ENCODE measurements at regions of chr3 and their contacts with region 1.

Region 1: DNA sequence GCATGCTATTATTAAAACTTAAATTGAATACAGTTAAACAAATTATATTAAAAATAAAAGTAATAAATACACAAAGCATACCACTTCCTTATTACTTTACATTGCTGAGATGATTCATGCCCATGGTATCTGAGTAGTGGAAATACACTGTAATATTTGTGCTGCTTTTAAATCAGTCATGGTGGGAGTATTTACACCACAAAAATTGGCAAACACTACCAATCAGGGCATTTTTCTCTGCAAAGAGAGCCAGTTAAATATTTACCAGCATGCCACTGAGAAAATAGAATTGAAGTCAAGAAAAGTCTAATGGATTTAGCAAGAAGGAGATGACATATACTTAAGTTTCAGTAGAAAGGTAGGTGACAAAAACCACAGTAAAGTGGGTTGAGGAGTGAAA is 19.6 kb downstream of the PPARG start:
- DNase-seq: peak; percentile 12
- H3K4me3 ChIP-seq: no peak overlapping the region
- H3K27ac ChIP-seq: no peak overlapping the region
- H3K4me1 ChIP-seq: no peaks in the 10 kb centered on the region
- H3K27me3 ChIP-seq: peaks cover 9% of the 10 kb centered on the region
- CTCF ChIP-seq: no peak

Region 2: DNA sequence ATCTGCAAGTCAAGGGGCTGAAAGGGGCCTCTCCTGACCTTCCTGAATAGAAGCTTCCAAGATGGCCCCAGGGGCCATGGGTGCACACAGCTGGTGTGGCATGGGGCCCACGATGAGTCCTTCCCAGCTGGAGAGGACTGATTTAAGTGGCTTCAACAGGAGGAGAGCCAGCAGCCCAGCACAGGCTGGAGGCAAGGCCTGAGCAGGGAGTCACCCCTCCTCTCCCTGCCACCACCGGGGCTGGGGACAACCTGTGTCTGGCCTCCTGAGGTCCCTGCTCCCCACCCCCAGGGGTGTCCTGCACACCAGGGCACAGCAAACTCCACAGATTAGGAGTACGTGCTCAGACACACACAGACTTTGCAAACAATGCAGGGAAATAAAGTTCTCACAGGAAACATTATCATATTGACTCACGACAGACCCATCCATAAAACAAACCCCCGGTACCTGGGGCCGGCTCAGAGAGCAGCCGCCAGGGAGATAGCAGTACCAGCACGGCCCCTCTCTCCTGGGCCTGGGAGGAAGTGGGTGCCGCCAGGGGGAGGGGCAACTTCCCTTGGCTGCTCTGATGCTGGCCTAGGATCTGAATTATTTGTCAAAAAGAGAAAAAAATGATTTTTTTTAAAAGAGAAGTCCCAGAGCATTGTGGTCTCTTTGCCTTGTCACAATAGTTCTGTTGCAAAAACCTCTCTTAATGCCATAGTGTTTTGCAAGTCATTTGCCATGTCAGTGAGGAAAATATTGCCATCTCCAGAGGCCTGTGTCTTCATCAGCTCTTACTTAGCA is 153.8 kb after region 1 on chr3:
- CTCF ChIA-PET with region 1: no interaction called
- POLR2A ChIA-PET with region 1: no interaction called
- intact Hi-C with region 1: loop called (anchors 10 kb)
- DNase-seq: no peak
- H3K4me3 ChIP-seq: no peak overlapping the region
- H3K27ac ChIP-seq: no peak overlapping the region
- H3K4me1 ChIP-seq: no peaks in the 10 kb centered on the region
- H3K27me3 ChIP-seq: no peaks in the 10 kb centered on the region
- CTCF ChIP-seq: no peak

Measured in A673 (cell line).